Activated naive CD4-positive, alpha-beta T cell treated with anti-CD3 and anti-CD28 coated beads for 36 hours (primary cell): ENCODE measurements at regions of chr9 and their contacts with region 1.

Region 1: GRCh38 chr9:70156729-70157128 is 102.0 kb upstream of the SMC5 start:
- DNase-seq: no peak
- H3K4me3 Mint-ChIP-seq: no peak overlapping the region
- H3K27ac Mint-ChIP-seq: no peak overlapping the region
- H3K4me1 Mint-ChIP-seq: no peaks in the 10 kb centered on the region
- H3K27me3 Mint-ChIP-seq: no peaks in the 10 kb centered on the region

Region 2: DNA sequence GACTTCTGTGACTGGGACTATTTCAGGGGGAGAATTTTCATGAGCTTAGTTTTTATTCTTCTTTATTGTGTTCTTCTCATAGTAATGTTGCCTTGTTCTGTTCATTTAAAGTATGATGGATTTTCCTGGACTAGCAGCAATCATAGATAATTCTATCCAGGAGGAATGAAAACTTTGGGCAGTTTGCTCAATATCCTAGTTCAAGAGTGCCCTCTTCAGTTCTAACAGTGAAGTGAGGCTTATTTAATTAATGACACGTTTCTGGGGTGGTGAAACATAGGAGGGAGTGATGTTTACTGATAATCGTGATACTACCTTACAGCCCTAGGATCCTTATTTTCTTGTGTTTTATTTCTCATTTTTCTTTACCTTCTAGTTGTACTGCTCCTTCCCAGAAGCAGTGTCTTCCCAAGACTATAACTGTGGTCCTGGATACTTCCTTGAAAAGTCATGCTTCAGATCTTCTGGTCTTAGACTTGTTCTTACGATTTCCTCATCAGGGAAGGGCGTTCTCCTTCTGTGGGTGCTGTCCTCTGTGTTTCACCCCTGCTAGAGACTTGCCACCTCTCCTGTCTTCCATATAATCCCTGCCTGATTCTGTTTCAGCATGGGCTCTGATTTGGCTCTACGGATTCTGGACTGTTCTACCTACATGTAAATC is 278.7 kb before region 1 on chr9:
- CTCF ChIA-PET with region 1: no interaction called
- intact Hi-C with region 1: no loop called
- DNase-seq: no peak
- H3K4me3 Mint-ChIP-seq: no peak overlapping the region
- H3K27ac Mint-ChIP-seq: no peak overlapping the region
- H3K4me1 Mint-ChIP-seq: no peaks in the 10 kb centered on the region
- H3K27me3 Mint-ChIP-seq: peaks cover 4% of the 10 kb centered on the region

Region 3: DNA sequence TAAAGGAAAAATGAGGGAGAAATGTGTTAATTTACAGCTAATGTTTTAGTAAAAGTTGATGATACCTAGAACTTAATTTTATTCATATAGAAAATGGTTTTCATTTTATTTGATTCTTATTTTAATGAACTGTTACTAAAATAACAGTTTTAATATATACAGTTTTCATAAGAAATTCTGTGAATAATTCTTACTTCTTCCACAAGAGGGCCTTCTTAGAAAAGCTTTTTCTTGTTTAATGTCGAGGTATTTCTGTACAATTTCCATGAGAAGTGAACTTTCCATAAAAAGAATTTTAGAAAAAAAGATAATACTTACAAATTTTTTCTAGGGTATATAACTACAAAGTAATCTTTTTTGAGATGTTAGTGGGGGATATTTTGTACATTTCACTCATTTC is 183.8 kb after region 1 on chr9:
- CTCF ChIA-PET with region 1: no interaction called
- intact Hi-C with region 1: loop called (anchors 10 kb)
- DNase-seq: no peak
- H3K4me3 Mint-ChIP-seq: no peak overlapping the region
- H3K27ac Mint-ChIP-seq: no peak overlapping the region
- H3K4me1 Mint-ChIP-seq: no peaks in the 10 kb centered on the region
- H3K27me3 Mint-ChIP-seq: no peaks in the 10 kb centered on the region